ENCODE measurements at regions of chr6 and their contacts with region 1.

Region 1: GRCh38 chr6:134097114-134097707 is 44.8 kb upstream of the SLC2A12 start:
- DNase-seq: no peak
- ATAC-seq: peak; percentile 78
- H3K4me3 ChIP-seq: no peak overlapping the region
- H3K27ac ChIP-seq: no peak overlapping the region
- H3K4me1 ChIP-seq: no peaks in the 10 kb centered on the region
- H3K27me3 ChIP-seq: no peaks in the 10 kb centered on the region
- CTCF ChIP-seq: peak; percentile 66

Region 2: DNA sequence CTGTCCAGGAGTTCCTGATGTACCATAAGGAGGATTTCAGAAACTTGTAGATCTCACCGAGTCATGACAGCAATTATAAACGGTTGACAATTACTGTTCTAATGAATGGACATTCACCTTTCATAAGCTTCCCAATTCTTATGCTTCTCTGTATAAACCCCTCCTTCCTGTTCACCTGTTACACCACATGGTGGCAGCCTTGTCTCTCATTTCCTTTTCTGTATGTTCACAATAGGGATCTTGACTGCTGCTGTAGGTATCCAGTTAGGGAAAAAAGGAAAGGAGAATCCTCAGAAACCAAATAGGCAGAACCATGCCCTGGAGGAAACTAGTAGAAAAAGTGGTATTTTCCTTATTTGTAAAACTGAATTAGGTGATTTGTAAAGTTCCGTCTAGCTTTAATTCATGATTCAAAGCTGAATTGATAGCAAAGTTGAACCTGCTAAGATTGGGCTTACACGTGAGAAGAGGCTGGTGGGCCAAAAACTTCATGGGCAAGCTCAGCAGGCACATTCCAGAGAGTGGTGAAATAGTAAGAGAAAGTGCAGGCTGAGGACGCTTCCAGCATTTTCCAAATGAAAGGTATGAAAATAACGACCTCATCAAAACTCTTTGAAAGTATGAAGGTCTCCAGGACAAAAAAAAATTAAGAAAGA is 173.1 kb before region 1 on chr6:
- intact Hi-C with region 1: loop called (anchors 5 kb)
- DNase-seq: no peak
- ATAC-seq: peak; percentile 97
- H3K4me3 ChIP-seq: no peak overlapping the region
- H3K27ac ChIP-seq: no peak overlapping the region
- H3K4me1 ChIP-seq: no peaks in the 10 kb centered on the region
- H3K27me3 ChIP-seq: peaks cover 11% of the 10 kb centered on the region
- CTCF ChIP-seq: peak; percentile 85

Measured in upper lobe of right lung (tissue), 1 donor.